ENCODE measurements at regions of chr18 and their contacts with region 1.

Region 1: DNA sequence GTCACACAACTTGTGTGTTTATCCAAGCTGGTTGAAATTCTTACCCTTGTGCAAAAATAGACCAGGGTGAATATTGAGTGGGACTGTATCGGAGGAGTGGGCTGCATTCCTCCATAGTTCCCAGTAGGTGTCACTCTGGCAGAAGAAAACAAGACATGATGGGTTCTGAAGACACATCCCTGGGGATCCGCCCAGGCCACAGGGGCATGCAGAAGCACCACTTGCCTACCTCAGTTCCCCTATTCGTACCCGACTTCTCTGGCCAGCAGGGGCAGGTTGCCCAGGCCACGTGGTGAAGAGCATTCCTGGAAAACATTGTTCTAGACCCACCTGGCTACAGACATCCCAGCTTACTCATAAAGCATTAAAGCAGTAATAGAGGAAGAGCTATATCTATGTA is 168.2 kb downstream of the FAM210A start:
- DNase-seq: peak; percentile 52
- ATAC-seq: peak; percentile 93
- H3K4me3 ChIP-seq: no peak overlapping the region
- H3K27ac ChIP-seq: no peak overlapping the region
- H3K4me1 ChIP-seq: no peaks in the 10 kb centered on the region
- H3K27me3 ChIP-seq: no peaks in the 10 kb centered on the region
- CTCF ChIP-seq: peak; percentile 78
- EP300 ChIP-seq: no peak
- POLR2A ChIP-seq: no peak
- RAD21 ChIP-seq: peak; percentile 63

Region 2: DNA sequence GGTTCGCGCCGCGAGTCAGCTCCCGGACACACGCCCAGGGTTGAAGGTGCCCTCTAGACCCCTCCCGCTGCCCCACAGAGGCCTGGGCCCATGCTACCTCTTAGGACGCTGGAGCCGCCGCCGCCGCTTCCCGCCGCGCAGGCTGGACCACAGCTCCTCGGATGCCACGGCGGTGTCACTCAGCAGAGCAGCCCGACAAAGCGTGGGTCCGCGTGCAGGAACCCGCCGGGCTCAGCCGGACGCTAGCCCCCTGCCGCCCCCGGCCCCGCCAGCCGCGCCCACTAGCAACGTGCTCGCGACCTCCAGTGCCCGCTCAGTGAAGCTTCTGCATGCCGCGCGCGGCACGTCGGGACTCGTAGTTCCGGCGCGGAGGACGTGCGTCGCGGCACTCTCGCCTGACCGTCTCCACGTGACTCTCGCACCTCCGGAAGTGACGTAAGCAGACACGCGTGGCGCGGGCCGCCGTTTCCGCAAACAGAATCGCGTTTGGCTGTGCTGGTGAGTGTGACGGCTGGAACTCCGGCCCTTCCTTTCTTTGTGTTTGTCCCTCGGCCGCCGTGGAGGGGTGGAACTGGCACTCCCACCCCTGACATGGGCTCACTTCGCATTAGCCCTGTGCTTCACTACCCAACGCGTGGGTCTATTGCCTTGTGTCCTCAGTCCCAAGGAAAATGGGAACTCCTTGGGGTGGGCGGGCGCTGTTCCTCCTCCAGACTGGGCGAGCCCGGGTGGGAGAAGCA is 168.3 kb after region 1 on chr18 and contains the starts of genes FAM210A and RNMT:
- CTCF ChIA-PET with region 1: no interaction called
- POLR2A ChIA-PET with region 1: no interaction called
- in situ Hi-C with region 1: no loop called
- intact Hi-C with region 1: loop called (anchors 5 kb)
- DNase-seq: peak; percentile 91
- ATAC-seq: peak; percentile 94
- H3K4me3 ChIP-seq: peak within 1 kb of the TSS; percentile 85 to 95 (median 90)
- H3K27ac ChIP-seq: peak within 1 kb of the TSS; percentile 91
- H3K4me1 ChIP-seq: peaks cover 65% of the 10 kb centered on the region
- H3K27me3 ChIP-seq: no peaks in the 10 kb centered on the region; a peak in 1 of 5 replicates
- CTCF ChIP-seq: peak; percentile 67
- EP300 ChIP-seq: 0 out of 4 replicates have a peak, but pooled peaks of 1 of the 2 experiments have one; percentile 27
- POLR2A ChIP-seq: peak; percentile 73 to 84
- RAD21 ChIP-seq: no peak; the same call in 1 of the 2 replicates
- total RNA-seq, gene FAM210A: 33.2 and 37.0 TPM in 2 replicates
- total RNA-seq, gene RNMT: 24.4 and 54.1 TPM in 2 replicates

Region 3: GRCh38 chr18:13800505-13801259 is 242.6 kb after region 1 on chr18:
- CTCF ChIA-PET with region 1: interaction called, 6 read pairs
- POLR2A ChIA-PET with region 1: no interaction called
- in situ Hi-C with region 1: loop called (anchors 25 kb)
- intact Hi-C with region 1: loop called (anchors 5 kb)
- DNase-seq: peak; percentile 49
- ATAC-seq: peak; percentile 99
- H3K4me3 ChIP-seq: peak overlapping the region; percentile 32 to 61 (median 38); a peak in 4 of 6 replicates
- H3K27ac ChIP-seq: no peak overlapping the region
- H3K4me1 ChIP-seq: peaks cover 10% of the 10 kb centered on the region
- H3K27me3 ChIP-seq: peaks cover 1 to 21% of the 10 kb centered on the region in 2 experiments; a peak in 3 of 5 replicates
- CTCF ChIP-seq: peak; percentile 91
- EP300 ChIP-seq: no peak
- POLR2A ChIP-seq: no peak
- RAD21 ChIP-seq: peak; percentile 76

Measured in HepG2 (cell line).